Colonic mucosa (tissue), 4 donors: ENCODE measurements at regions of chr9 and their contacts with region 1.

Region 1: DNA sequence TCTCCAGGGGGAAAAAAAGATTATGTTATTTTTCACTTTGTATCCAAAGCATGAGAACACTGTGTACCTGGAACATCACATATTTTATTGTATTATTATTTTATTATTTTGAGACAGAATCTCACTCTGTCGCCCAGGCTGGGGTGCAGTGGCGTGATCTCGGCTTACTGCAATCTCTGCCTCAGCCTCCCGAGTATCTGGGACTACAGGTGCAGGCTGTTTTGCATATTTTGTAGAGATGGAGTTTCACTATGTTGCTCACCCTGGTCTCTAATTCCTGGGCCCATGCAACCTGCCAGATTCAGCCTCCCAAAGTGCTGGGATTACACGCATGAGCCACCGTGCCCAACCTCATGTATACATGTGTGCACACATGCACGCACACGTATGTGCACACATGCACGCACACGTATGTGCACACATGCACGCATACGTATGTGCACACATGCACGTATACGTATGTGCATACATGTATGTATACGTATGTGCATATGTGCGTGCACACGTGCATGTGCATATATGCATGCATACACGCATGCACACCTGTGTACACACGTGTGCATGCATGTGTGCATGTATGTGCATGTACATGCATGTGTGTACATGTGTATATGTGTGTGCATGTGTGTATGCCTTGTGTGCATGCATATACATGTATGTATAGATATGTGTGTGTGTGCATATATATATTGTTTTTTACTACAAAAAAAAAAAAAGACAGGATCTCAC is 9.5 kb upstream of the UGCG start:
- DNase-seq: no peak
- H3K4me3 ChIP-seq: no peak overlapping the region
- H3K27ac ChIP-seq: no peak overlapping the region
- H3K4me1 ChIP-seq: no peaks in the 10 kb centered on the region
- H3K27me3 ChIP-seq: no peaks in the 10 kb centered on the region
- CTCF ChIP-seq: no peak

Region 2: GRCh38 chr9:111783857-111784256 is 103.3 kb before region 1 on chr9:
- intact Hi-C with region 1: loop called (anchors 10 kb)
- DNase-seq: no peak
- H3K4me3 ChIP-seq: no peak overlapping the region
- H3K27ac ChIP-seq: no peak overlapping the region
- H3K4me1 ChIP-seq: no peaks in the 10 kb centered on the region
- H3K27me3 ChIP-seq: no peaks in the 10 kb centered on the region
- CTCF ChIP-seq: no peak